Heart right ventricle (tissue), 16 donors: ENCODE measurements at regions of chr22 and their contacts with region 1.

Region 1: DNA sequence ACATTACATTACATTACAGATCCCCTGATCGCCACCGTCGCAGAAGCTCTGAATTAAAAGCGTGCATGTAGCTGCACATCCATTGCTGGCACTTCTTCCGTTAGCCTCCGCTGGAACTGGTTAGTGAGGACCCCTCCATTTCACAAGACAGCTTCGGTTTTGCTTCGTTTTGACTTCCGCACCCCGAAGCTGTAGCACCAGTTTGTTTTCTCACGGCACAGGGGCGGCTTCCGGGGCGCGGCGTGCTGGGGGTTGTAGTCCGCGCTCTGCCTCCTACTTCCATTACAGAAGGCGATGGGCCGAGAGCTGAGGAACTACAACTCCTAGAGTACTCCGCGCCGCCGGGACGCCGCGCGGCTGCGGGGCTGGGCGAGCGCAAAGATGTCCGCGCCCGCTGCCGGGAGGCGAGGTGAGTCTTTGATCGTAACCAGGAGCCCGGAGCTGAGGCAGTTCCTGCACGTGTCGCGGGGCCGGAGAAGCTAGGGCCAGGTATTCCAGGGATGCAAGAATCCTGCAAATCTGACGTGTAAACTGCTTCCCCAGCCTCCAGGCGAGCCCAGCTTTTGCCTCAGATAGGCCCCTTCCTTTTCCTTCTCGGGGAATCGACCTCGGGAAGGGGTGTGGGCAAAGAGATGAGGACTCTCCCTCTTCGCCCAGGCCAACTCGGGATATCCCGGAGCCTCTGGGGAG is at the start of gene PEX26:
- DNase-seq: peak; percentile 91 to 95
- ATAC-seq: peak; percentile 95 to 99 (median 98)
- H3K4me3 ChIP-seq: peak within 1 kb of the TSS; percentile 80 to 99 (median 93)
- H3K27ac ChIP-seq: peak within 1 kb of the TSS; percentile 23 to 91 (median 86)
- H3K4me1 ChIP-seq: peaks cover 9 to 38% (median 29%) of the 10 kb centered on the region in 9 donors
- H3K27me3 ChIP-seq: no peaks in the 10 kb centered on the region
- CTCF ChIP-seq: no peak
- total RNA-seq, gene PEX26: 16.6 to 27.1 (median 21.3) TPM

Region 2: DNA sequence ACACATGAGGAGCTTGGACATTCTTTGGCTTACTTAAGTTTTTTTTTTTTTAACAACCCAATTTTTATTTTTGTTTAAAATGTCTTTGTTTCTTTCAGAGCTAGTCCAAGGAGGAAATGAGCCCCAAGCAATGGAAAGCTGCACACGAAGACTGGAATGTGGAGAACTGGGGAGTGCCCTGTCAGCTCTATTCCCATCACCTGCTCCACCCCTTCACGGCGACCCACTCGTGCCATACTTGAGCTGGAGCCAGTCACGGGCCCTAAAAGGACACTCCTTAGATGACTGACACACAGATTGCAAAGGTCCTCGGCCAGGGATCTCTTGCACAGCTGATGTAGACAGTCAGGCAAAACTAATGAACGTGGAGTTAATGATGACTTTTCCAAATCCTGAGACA is 525.0 kb before region 1 on chr22:
- intact Hi-C with region 1: loop called in 1 of 10 experiments (anchors 10 kb)
- DNase-seq: peak in 1 of 2 donors; percentile 39
- ATAC-seq: peak in 7 of 8 donors; percentile 38 to 81 (median 58)
- H3K4me3 ChIP-seq: no peak overlapping the region
- H3K27ac ChIP-seq: peak overlapping the region in 1 of 10 donors; percentile 12
- H3K4me1 ChIP-seq: no peaks in the 10 kb centered on the region
- H3K27me3 ChIP-seq: no peaks in the 10 kb centered on the region
- CTCF ChIP-seq: no peak

Region 3: GRCh38 chr22:17742527-17742902 is 335.3 kb before region 1 on chr22:
- intact Hi-C with region 1: loop called in 5 of 10 experiments (anchors 5 to 10 kb)
- DNase-seq: peak; percentile 58 to 61
- ATAC-seq: peak in 7 of 8 donors; percentile 50 to 77 (median 70)
- H3K4me3 ChIP-seq: no peak overlapping the region
- H3K27ac ChIP-seq: no peak overlapping the region
- H3K4me1 ChIP-seq: peaks cover 0 to 22% (median 14%) of the 10 kb centered on the region in 9 donors
- H3K27me3 ChIP-seq: no peaks in the 10 kb centered on the region
- CTCF ChIP-seq: peak; percentile 62 to 83 (median 75)

Region 4: GRCh38 chr22:17891481-17892167 is 186.2 kb before region 1 on chr22:
- intact Hi-C with region 1: loop called in 4 of 10 experiments (anchors 5 kb)
- DNase-seq: peak; percentile 65 to 69
- ATAC-seq: peak; percentile 72 to 86 (median 80)
- H3K4me3 ChIP-seq: no peak overlapping the region
- H3K27ac ChIP-seq: peak overlapping the region in 9 of 10 donors; percentile 36 to 84 (median 75)
- H3K4me1 ChIP-seq: peaks cover 5 to 50% (median 27%) of the 10 kb centered on the region in 9 donors
- H3K27me3 ChIP-seq: no peaks in the 10 kb centered on the region
- CTCF ChIP-seq: peak; percentile 17 to 73 (median 51)

Region 5: GRCh38 chr22:17903564-17904295 is 174.1 kb before region 1 on chr22:
- intact Hi-C with region 1: loop called in 4 of 10 experiments (anchors 2 to 10 kb)
- DNase-seq: peak in 1 of 2 donors; percentile 28
- ATAC-seq: peak in 7 of 8 donors; percentile 25 to 77 (median 55)
- H3K4me3 ChIP-seq: no peak overlapping the region
- H3K27ac ChIP-seq: peak overlapping the region in 9 of 10 donors; percentile 22 to 72 (median 50)
- H3K4me1 ChIP-seq: peaks cover 11 to 69% (median 37%) of the 10 kb centered on the region in 9 donors
- H3K27me3 ChIP-seq: no peaks in the 10 kb centered on the region
- CTCF ChIP-seq: peak in 1 of 9 donors; percentile 26

Region 6: DNA sequence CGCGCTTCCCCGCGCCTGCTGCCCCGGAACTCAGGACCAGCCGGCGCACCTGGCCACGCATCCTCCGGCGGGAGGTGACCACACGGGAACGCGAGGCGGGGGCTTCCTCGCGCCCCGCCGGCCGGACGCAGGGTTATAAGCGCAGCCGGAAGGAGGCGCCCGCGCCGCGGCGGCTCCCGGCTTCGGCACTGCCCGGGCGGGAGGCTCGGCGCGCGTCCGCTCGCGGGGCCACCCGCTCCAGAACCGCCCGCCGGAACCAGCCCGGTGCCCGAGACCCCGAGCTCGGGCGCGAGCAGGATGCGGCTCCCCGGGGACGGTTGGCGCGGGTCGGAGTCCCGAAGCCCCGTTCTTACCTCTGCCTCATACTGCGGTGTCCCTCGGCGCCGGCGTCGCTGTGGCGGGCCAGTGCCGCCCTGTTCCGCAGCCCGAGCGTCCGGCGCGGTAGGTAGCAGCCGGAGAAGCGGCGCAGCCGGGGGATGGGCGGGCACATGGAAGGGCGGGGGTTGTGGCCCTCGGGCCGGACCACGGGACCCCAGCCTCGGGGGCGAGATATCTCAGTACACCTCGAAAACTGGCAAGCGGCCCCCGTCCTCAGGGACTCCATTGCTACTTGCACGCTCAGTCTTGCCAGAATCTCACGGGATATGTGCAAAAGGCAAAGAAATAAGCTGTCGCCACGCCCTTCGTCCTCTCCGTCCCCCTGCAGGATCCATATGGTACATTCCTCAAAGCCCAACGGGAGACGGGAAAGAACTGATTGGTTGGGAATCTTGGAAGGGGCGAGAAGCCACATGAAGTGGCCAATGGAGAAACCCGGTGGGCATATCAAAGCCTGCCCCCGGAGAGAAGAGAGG is 76.5 kb before region 1 on chr22:
- intact Hi-C with region 1: loop called in 4 of 10 experiments (anchors 1 to 10 kb)
- DNase-seq: peak; percentile 90 to 94
- ATAC-seq: peak; percentile 96 to 98 (median 97)
- H3K4me3 ChIP-seq: peak overlapping the region; percentile 57 to 92 (median 76)
- H3K27ac ChIP-seq: peak overlapping the region; percentile 85 to 98 (median 91)
- H3K4me1 ChIP-seq: peaks cover 0 to 53% (median 25%) of the 10 kb centered on the region in 9 donors
- H3K27me3 ChIP-seq: peaks cover 0 to 12% (median 0%) of the 10 kb centered on the region in 7 donors
- CTCF ChIP-seq: peak in 8 of 9 donors; percentile 21 to 67 (median 52)

Region 7: DNA sequence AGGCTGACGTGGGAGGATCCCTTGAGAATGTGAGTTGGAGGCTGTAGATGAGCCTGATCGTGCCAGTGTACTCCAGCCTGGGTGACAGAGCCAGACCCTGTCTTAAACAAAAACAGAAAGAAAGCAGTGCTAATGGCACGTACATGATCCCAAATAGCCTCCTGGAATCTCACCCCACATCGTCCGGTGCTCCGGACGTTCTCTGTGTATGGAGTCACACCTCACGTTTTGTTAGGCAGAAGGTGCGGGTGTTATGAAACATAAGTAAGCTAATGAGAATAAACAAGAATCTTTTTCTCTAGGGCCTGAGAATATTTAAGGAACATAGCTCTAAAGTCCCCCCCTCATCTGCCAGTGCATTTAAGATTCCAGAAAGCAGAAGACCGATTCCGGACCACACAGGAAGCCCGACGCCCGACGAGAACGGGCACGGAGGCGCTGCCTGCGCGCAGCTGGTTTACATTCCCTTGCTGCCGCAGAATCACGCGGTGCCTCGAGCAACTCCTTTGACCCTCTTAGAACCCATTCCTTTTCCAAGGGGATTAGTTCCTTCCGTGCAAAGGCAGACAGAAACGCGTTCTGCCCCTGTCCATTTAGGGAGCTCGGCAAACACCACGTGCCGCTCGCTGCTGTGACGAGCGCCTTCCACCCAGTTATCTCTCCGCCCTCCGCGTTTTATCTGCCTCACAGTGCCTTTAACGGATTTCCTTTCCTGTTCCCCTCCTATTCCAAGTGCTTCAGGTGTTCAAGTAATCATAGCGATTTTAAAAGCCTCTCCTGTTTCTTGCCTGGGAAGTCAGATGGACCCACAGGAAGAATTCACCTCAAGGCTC is 29.5 kb before region 1 on chr22:
- intact Hi-C with region 1: no loop called
- DNase-seq: no peak
- ATAC-seq: no peak
- H3K4me3 ChIP-seq: peak overlapping the region in 4 of 10 donors; percentile 5 to 29 (median 23)
- H3K27ac ChIP-seq: no peak overlapping the region
- H3K4me1 ChIP-seq: peaks cover 6 to 23% (median 15%) of the 10 kb centered on the region in 9 donors
- H3K27me3 ChIP-seq: peaks cover 0 to 16% (median 0%) of the 10 kb centered on the region in 7 donors
- CTCF ChIP-seq: no peak